ENCODE measurements at regions of chr7 and their contacts with region 1.

Region 1: DNA sequence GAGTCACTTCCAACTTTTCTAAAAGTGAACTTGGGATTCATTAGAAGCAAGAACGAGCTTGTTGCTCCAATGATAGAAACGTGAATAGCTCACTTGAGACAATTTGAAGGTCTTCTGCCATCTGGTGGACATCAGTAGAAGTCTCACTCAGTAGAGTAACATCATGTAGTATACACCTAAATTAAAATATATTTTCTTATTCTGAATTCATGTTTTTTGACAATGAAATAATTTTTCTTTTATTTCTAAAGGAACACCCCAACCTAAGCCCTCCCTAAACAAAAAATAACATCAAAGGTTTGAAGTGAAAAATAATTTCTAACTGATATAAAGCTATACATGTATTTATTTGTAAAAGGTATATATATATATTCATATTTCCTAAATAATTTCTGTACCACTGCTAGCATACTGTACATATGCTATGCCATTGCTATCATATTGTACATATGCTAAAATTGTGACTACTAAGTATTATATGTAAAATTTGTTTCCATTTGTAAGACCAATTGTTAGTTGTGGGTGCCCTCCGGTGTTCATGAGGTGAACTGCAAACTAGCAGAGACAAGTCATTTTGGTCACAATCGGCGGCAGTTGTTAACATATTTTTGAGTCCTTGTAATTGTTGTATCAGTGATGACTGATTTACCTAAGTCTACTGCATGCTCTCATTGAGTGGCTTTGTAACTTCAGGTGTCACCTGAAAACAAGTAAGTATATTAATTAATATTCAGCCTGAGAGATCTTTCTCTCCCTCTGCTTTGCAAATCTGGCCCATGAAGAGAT is 121.9 kb downstream of the PTPRZ1 start:
- DNase-seq: peak; percentile 68
- CTCF ChIP-seq: peak; percentile 61

Region 2: GRCh38 chr7:121107923-121108498 is 886.8 kb before region 1 on chr7:
- in situ Hi-C with region 1: loop called (anchors 25 kb)
- DNase-seq: peak; percentile 24
- CTCF ChIP-seq: peak; percentile 65

Region 3: GRCh38 chr7:121752706-121753105 is 242.1 kb before region 1 on chr7:
- in situ Hi-C with region 1: loop called (anchors 10 kb)
- DNase-seq: no peak
- CTCF ChIP-seq: peak; percentile 11

Region 4: GRCh38 chr7:122182081-122182480 is 187.3 kb after region 1 on chr7:
- in situ Hi-C with region 1: no loop called
- DNase-seq: no peak
- CTCF ChIP-seq: no peak

Region 5: GRCh38 chr7:123004931-123005330 is 1010.1 kb after region 1 on chr7:
- in situ Hi-C with region 1: no loop called
- DNase-seq: no peak
- CTCF ChIP-seq: no peak